Heart right ventricle (tissue), 16 donors: ENCODE measurements at regions of chr5 and their contacts with region 1.

Region 1: GRCh38 chr5:32709781-32710549 is 1.2 kb upstream of the NPR3 start:
- DNase-seq: peak; percentile 68 to 75
- ATAC-seq: peak; percentile 51 to 77 (median 69)
- H3K4me3 ChIP-seq: peak overlapping the region; percentile 36 to 92 (median 68)
- H3K27ac ChIP-seq: peak overlapping the region; percentile 54 to 96 (median 83)
- H3K4me1 ChIP-seq: peaks cover 7 to 46% (median 27%) of the 10 kb centered on the region in 9 donors
- H3K27me3 ChIP-seq: peaks cover 0 to 71% (median 27%) of the 10 kb centered on the region in 7 donors
- CTCF ChIP-seq: peak; percentile 33 to 82 (median 69)

Region 2: GRCh38 chr5:32852535-32852934 is 142.6 kb after region 1 on chr5:
- intact Hi-C with region 1: loop called in 5 of 10 experiments (anchors 5 to 10 kb)
- DNase-seq: peak in 1 of 2 donors; percentile 4
- ATAC-seq: peak in 7 of 8 donors; percentile 58 to 80 (median 65)
- H3K4me3 ChIP-seq: no peak overlapping the region
- H3K27ac ChIP-seq: no peak overlapping the region
- H3K4me1 ChIP-seq: peaks cover 0 to 9% (median 0%) of the 10 kb centered on the region in 9 donors
- H3K27me3 ChIP-seq: no peaks in the 10 kb centered on the region
- CTCF ChIP-seq: peak in 7 of 9 donors; percentile 30 to 52 (median 45)

Region 3: GRCh38 chr5:32916648-32917047 is 206.7 kb after region 1 on chr5:
- intact Hi-C with region 1: loop called in 3 of 10 experiments (anchors 5 to 10 kb)
- DNase-seq: no peak
- ATAC-seq: peak in 3 of 8 donors; percentile 25 to 63 (median 49)
- H3K4me3 ChIP-seq: no peak overlapping the region
- H3K27ac ChIP-seq: no peak overlapping the region
- H3K4me1 ChIP-seq: peaks cover 0 to 5% (median 0%) of the 10 kb centered on the region in 9 donors
- H3K27me3 ChIP-seq: no peaks in the 10 kb centered on the region
- CTCF ChIP-seq: peak in 7 of 9 donors; percentile 27 to 53 (median 40)

Region 4: DNA sequence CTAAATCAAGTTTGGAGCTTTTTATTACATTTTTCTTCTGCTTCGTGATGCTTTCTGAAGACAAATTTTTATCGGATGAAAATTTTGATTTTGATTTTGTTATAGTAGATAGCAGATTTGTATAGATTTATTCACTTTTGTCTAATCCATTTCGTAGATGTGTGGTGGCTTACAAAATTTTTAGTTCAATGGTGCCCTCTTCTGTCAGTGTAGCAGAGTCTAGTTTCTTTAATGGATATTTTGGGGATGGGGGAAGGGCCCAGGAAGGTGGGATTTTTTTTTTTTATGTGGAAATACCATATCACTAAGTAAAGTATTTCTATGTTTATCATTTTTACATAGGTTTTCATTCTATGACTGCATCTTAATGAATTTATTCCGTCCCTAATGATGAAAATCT is 470.9 kb after region 1 on chr5:
- intact Hi-C with region 1: loop called in 7 of 10 experiments (anchors 2 to 10 kb)
- DNase-seq: peak in 1 of 2 donors; percentile 11
- ATAC-seq: peak in 1 of 8 donors; percentile 74
- H3K4me3 ChIP-seq: no peak overlapping the region
- H3K27ac ChIP-seq: no peak overlapping the region
- H3K4me1 ChIP-seq: peaks cover 0 to 4% (median 0%) of the 10 kb centered on the region in 9 donors
- H3K27me3 ChIP-seq: no peaks in the 10 kb centered on the region
- CTCF ChIP-seq: peak in 7 of 9 donors; percentile 23 to 64 (median 52)

Region 5: GRCh38 chr5:33299621-33300208 is 589.8 kb after region 1 on chr5:
- intact Hi-C with region 1: loop called in 7 of 10 experiments (anchors 5 to 10 kb)
- DNase-seq: no peak
- ATAC-seq: peak; percentile 32 to 83 (median 78)
- H3K4me3 ChIP-seq: no peak overlapping the region
- H3K27ac ChIP-seq: peak overlapping the region in 6 of 10 donors; percentile 11 to 63 (median 49)
- H3K4me1 ChIP-seq: peaks cover 3 to 21% (median 14%) of the 10 kb centered on the region in 9 donors
- H3K27me3 ChIP-seq: no peaks in the 10 kb centered on the region
- CTCF ChIP-seq: peak; percentile 19 to 63 (median 43)

Region 6: GRCh38 chr5:33423018-33423630 is 713.2 kb after region 1 on chr5:
- intact Hi-C with region 1: loop called in 7 of 10 experiments (anchors 5 to 10 kb)
- DNase-seq: no peak
- ATAC-seq: peak in 2 of 8 donors; percentile 21 to 59
- H3K4me3 ChIP-seq: no peak overlapping the region
- H3K27ac ChIP-seq: no peak overlapping the region
- H3K4me1 ChIP-seq: peaks cover 0 to 5% (median 0%) of the 10 kb centered on the region in 9 donors
- H3K27me3 ChIP-seq: peaks cover 0 to 2% (median 0%) of the 10 kb centered on the region in 7 donors
- CTCF ChIP-seq: peak in 7 of 9 donors; percentile 21 to 65 (median 54)